Caco-2 (cell line): ENCODE measurements at regions of chr10 and their contacts with region 1.

Region 1: DNA sequence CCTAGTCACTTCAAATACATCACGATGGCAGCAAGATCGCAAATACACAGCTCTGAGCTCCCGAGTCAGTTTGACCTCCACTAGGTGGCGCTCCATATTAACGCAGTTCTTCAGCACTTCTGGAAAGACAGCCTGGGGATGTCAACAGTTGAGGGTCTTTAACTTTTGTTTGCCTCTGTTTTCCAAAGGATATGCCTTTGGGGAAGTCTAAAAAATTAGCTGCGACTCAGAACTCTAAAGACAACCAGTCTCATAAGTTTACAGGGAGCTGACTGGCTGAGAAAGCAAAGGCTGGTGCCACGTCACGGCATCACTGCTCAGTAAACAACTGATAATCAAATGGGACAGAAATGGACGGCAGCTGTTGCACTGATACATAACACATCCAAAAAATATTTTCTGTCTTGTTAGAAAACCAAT is 458.8 kb downstream of the SORCS1 start:
- DNase-seq: peak; percentile 56 to 61
- H3K4me3 ChIP-seq: no peak overlapping the region
- H3K4me3 Mint-ChIP-seq: no peak overlapping the region
- H3K27ac Mint-ChIP-seq: no peak overlapping the region
- H3K4me1 ChIP-seq: no peaks in the 10 kb centered on the region
- H3K4me1 Mint-ChIP-seq: no peaks in the 10 kb centered on the region
- H3K27me3 ChIP-seq: no peaks in the 10 kb centered on the region
- H3K27me3 Mint-ChIP-seq: peaks cover 9% of the 10 kb centered on the region
- CTCF ChIP-seq: peak; percentile 78 to 80

Region 2: GRCh38 chr10:106625751-106626150 is 79.9 kb before region 1 on chr10:
- CTCF ChIA-PET with region 1: no interaction called
- POLR2A ChIA-PET with region 1: no interaction called
- intact Hi-C with region 1: loop called (anchors 2 kb)
- DNase-seq: no peak
- H3K4me3 ChIP-seq: no peak overlapping the region
- H3K4me3 Mint-ChIP-seq: no peak overlapping the region
- H3K27ac Mint-ChIP-seq: no peak overlapping the region
- H3K4me1 ChIP-seq: no peaks in the 10 kb centered on the region
- H3K4me1 Mint-ChIP-seq: no peaks in the 10 kb centered on the region
- H3K27me3 ChIP-seq: no peaks in the 10 kb centered on the region
- H3K27me3 Mint-ChIP-seq: peaks cover 5% of the 10 kb centered on the region
- CTCF ChIP-seq: no peak

Region 3: DNA sequence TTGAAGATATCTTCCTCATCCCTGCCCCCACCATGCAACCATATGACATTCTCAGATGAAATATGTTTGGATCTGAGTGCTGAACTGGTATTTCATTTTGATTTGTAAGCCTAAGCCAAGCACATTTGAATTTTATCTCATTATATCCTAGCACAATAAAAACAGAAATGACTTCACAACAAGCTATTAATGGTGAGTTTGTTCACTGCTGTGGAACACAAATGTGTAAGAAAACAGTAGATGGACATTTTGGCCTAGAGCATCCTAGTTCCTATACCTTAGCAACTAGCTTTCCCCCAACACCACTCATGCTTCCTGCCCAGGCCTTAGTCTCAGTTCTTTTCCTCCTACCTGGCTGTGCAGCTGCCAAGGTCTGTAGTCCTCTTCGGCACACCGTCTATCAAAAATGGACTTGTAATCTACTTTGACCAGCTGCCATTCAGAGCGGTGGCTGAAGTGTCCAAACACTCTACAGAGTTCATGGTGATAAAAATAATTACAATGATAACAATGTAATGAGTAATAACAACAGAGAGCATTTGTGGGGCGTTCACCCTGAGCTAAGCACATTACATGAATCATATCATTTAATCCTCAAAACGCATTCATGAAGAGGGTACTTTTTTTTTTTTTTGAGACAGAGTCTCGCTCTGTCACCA is 33.0 kb before region 1 on chr10:
- CTCF ChIA-PET with region 1: no interaction called
- POLR2A ChIA-PET with region 1: no interaction called
- intact Hi-C with region 1: no loop called
- DNase-seq: no peak
- H3K4me3 ChIP-seq: no peak overlapping the region
- H3K4me3 Mint-ChIP-seq: no peak overlapping the region
- H3K27ac Mint-ChIP-seq: no peak overlapping the region
- H3K4me1 ChIP-seq: no peaks in the 10 kb centered on the region
- H3K4me1 Mint-ChIP-seq: no peaks in the 10 kb centered on the region
- H3K27me3 ChIP-seq: no peaks in the 10 kb centered on the region
- H3K27me3 Mint-ChIP-seq: peaks cover 2% of the 10 kb centered on the region
- CTCF ChIP-seq: no peak

Region 4: DNA sequence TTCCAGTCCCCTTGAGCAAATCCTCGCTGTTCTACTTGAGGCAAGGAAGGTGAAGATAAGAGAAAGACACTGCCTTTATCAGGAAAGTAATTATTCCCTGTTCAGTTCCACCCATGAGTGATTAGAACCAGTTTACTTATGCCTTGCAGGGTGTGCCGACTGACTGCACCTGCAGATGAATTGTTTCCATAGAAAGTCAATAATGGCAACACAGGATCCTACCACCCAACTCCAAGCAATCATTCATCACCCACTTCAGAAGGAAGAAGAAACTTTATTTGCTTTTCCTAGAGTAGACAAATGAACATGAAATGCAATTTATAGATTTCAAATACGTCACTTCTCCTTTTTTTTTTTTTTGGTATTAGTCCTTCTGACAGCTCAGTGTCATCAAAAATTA is 74.9 kb after region 1 on chr10:
- CTCF ChIA-PET with region 1: no interaction called
- POLR2A ChIA-PET with region 1: no interaction called
- intact Hi-C with region 1: loop called (anchors 10 kb)
- DNase-seq: no peak
- H3K4me3 ChIP-seq: no peak overlapping the region
- H3K4me3 Mint-ChIP-seq: no peak overlapping the region
- H3K27ac Mint-ChIP-seq: no peak overlapping the region
- H3K4me1 ChIP-seq: no peaks in the 10 kb centered on the region
- H3K4me1 Mint-ChIP-seq: no peaks in the 10 kb centered on the region
- H3K27me3 ChIP-seq: no peaks in the 10 kb centered on the region; the same call in 1 of the 2 replicates
- H3K27me3 Mint-ChIP-seq: peaks cover 2% of the 10 kb centered on the region
- CTCF ChIP-seq: no peak

Region 5: GRCh38 chr10:107144490-107144889 is 438.8 kb after region 1 on chr10:
- CTCF ChIA-PET with region 1: no interaction called
- POLR2A ChIA-PET with region 1: no interaction called
- intact Hi-C with region 1: loop called (anchors 5 kb)
- DNase-seq: peak in 1 of 2 experiments; percentile 6
- H3K4me3 ChIP-seq: no peak overlapping the region
- H3K4me3 Mint-ChIP-seq: no peak overlapping the region
- H3K27ac Mint-ChIP-seq: no peak overlapping the region
- H3K4me1 ChIP-seq: no peaks in the 10 kb centered on the region
- H3K4me1 Mint-ChIP-seq: no peaks in the 10 kb centered on the region
- H3K27me3 ChIP-seq: no peaks in the 10 kb centered on the region
- H3K27me3 Mint-ChIP-seq: no peaks in the 10 kb centered on the region
- CTCF ChIP-seq: no peak

Region 6: GRCh38 chr10:107264742-107265141 is 559.1 kb after region 1 on chr10:
- CTCF ChIA-PET with region 1: no interaction called
- POLR2A ChIA-PET with region 1: no interaction called
- intact Hi-C with region 1: loop called (anchors 1 kb)
- DNase-seq: peak in 1 of 2 experiments; percentile 1
- H3K4me3 ChIP-seq: no peak overlapping the region
- H3K4me3 Mint-ChIP-seq: no peak overlapping the region
- H3K27ac Mint-ChIP-seq: no peak overlapping the region
- H3K4me1 ChIP-seq: no peaks in the 10 kb centered on the region
- H3K4me1 Mint-ChIP-seq: no peaks in the 10 kb centered on the region
- H3K27me3 ChIP-seq: no peaks in the 10 kb centered on the region
- H3K27me3 Mint-ChIP-seq: peaks cover 3% of the 10 kb centered on the region
- CTCF ChIP-seq: no peak

Region 7: DNA sequence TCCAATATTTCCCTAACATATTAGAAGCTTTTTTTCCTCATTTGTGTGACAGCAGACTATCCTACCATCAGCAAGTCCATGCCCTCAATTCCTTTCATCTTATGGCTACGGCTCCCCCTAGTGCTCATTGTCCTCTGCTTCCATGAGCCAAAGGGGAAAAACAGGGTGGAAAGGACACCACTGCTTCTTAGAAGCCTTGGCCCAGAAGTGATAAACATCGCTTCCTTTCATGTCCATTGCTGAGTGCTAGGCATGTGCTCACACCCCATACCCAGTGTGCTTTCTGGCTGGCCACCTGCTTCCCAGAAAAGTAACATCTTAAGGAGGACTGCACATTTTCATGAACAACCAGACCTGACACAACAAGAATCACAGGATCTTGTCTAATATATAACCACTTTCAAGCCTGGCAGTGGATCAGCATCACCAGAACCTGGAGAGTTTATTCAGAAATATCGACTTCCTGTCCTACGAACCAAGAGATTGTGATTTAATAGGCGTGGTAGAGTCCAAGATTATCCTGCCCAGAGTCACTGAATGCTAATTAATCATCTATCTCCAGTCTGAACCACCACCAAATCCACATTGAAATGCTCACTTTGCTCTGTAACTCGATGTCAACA is 1109.3 kb after region 1 on chr10:
- CTCF ChIA-PET with region 1: no interaction called
- POLR2A ChIA-PET with region 1: no interaction called
- intact Hi-C with region 1: loop called (anchors 1 kb)
- DNase-seq: peak; percentile 49 to 62
- H3K4me3 ChIP-seq: no peak overlapping the region
- H3K4me3 Mint-ChIP-seq: no peak overlapping the region
- H3K27ac Mint-ChIP-seq: no peak overlapping the region
- H3K4me1 ChIP-seq: no peaks in the 10 kb centered on the region
- H3K4me1 Mint-ChIP-seq: no peaks in the 10 kb centered on the region
- H3K27me3 ChIP-seq: no peaks in the 10 kb centered on the region
- H3K27me3 Mint-ChIP-seq: peaks cover 4% of the 10 kb centered on the region
- CTCF ChIP-seq: peak; percentile 69 to 71